ENCODE measurements at regions of chr6 and their contacts with region 1.

Region 1: GRCh38 chr6:52419809-52420670 is at the start of gene EFHC1:
- DNase-seq: peak; percentile 98 to 99
- ATAC-seq: peak; percentile 99
- H3K4me3 ChIP-seq: peak within 1 kb of the TSS; percentile 84
- H3K27ac ChIP-seq: peak within 1 kb of the TSS; percentile 76
- H3K4me1 ChIP-seq: no peaks in the 10 kb centered on the region
- H3K27me3 ChIP-seq: no peaks in the 10 kb centered on the region
- CTCF ChIP-seq: no peak
- total RNA-seq, gene EFHC1: 1.5 to 2.1 (median 1.7) TPM

Region 2: DNA sequence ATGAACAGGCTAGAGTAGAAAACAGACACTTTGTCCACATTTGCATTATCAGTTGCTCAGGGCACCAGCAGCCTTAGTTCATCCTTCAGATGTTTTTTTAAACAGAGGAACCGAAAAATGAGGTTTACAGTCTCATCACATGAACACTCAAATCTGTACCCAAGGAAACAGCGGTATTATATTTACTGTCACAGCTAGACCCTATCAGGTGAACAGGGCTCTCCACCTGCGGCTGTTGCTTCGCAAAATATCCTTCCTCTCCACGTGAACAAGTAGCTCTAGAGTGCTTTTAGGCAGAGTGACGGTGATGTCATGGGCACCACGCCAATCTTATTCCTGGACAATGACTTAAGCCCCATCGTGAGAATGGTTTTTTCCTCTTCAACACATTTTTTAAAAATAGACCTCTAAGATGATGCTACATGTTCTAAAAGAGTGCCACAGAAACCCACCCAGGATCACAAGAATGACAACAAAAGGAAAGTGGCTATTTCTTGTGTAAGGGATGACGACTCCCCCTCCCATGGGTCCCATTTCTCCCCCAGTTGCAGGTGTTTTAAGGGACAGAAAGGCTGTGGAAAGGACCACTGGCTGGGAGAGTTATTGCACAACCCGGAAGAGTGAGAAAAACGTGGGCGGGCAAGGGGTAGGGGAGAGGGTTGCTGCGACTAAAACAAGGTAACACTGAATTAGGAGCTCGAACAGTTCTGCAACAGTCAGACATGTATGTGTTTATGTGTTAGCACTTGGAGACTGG is 77.8 kb after region 1 on chr6:
- intact Hi-C with region 1: loop called (anchors 2 kb)
- DNase-seq: peak in 1 of 2 donors; percentile 50
- ATAC-seq: no peak
- H3K4me3 ChIP-seq: no peak overlapping the region
- H3K27ac ChIP-seq: no peak overlapping the region
- H3K4me1 ChIP-seq: peaks cover 25% of the 10 kb centered on the region
- H3K27me3 ChIP-seq: no peaks in the 10 kb centered on the region
- CTCF ChIP-seq: no peak

Region 3: DNA sequence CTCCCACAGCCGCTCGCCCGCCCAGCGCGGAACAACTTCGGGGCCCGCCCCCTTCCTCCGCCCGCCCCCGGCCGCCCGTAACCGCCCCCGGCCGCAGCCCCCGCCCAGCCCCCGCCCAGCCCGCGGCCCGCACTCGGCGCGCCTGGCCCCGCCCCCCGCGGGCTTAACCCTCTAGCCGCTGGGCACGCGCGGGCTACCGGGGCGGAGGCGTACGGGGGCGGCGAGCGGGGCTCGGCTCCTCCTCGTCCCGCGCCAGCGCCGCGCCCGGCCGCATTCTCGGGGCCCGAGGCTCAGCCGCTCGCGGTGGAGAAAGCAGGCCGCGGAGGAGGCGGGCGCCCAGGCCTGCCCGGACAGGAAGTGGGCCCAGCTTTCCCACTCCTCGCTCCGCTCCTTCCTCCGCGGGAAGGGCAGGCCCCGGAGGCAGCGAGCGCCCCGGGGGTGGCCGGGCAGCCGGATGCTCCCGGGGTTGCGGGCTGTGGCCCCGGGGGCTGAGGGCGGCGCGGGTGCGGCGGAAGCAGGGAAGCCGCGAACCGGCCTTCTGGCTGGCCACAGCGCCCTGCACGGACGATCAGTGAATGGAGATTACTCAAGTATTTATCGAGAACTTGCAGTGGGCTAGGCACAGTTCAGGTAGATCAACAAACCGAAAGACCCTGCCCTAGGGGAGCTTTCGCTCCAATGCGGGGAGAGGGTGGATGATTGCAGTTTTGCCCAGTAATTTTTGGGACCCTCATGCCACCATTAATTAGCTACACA is 157.2 kb after region 1 on chr6 and contains the start of gene TRAM2:
- intact Hi-C with region 1: loop called (anchors 1 to 5 kb)
- DNase-seq: peak; percentile 92
- ATAC-seq: peak; percentile 92 to 95 (median 94)
- H3K4me3 ChIP-seq: peak within 1 kb of the TSS; percentile 98
- H3K27ac ChIP-seq: peak within 1 kb of the TSS; percentile 98
- H3K4me1 ChIP-seq: peaks cover 19% of the 10 kb centered on the region
- H3K27me3 ChIP-seq: no peaks in the 10 kb centered on the region
- CTCF ChIP-seq: peak; percentile 26
- total RNA-seq, gene TRAM2: 3.4 to 5.7 (median 4.5) TPM

Region 4: GRCh38 chr6:52598123-52598823 is 178.2 kb after region 1 on chr6:
- intact Hi-C with region 1: loop called (anchors 1 to 5 kb)
- DNase-seq: peak; percentile 62 to 75
- ATAC-seq: peak; percentile 77 to 92 (median 82)
- H3K4me3 ChIP-seq: peak overlapping the region; percentile 51
- H3K27ac ChIP-seq: no peak overlapping the region
- H3K4me1 ChIP-seq: peaks cover 9% of the 10 kb centered on the region
- H3K27me3 ChIP-seq: no peaks in the 10 kb centered on the region
- CTCF ChIP-seq: peak; percentile 66

Region 5: GRCh38 chr6:52664186-52664990 is 244.3 kb after region 1 on chr6:
- intact Hi-C with region 1: loop called (anchors 1 to 2 kb)
- DNase-seq: peak; percentile 79 to 87
- ATAC-seq: peak; percentile 89 to 99 (median 98)
- H3K4me3 ChIP-seq: peak overlapping the region; percentile 84
- H3K27ac ChIP-seq: peak overlapping the region; percentile 53
- H3K4me1 ChIP-seq: no peaks in the 10 kb centered on the region
- H3K27me3 ChIP-seq: peaks cover 0 to 5% (median 0%) of the 10 kb centered on the region in 3 donors
- CTCF ChIP-seq: no peak

Region 6: GRCh38 chr6:52675372-52675771 is 255.3 kb after region 1 on chr6:
- intact Hi-C with region 1: no loop called
- DNase-seq: no peak
- ATAC-seq: no peak
- H3K4me3 ChIP-seq: no peak overlapping the region
- H3K27ac ChIP-seq: no peak overlapping the region
- H3K4me1 ChIP-seq: peaks cover 8% of the 10 kb centered on the region
- H3K27me3 ChIP-seq: no peaks in the 10 kb centered on the region
- CTCF ChIP-seq: no peak

Measured in psoas muscle (tissue), 8 donors.